ENCODE measurements at regions of chr2 and their contacts with region 1.

Region 1: GRCh38 chr2:75640621-75641121 is 5.9 kb upstream of the MRPL19 start:
- DNase-seq: peak in 8 of 9 experiments; percentile 11 to 62 (median 49)
- ATAC-seq: peak; percentile 99
- H3K4me3 ChIP-seq: no peak overlapping the region
- H3K4me3 Mint-ChIP-seq: no peak overlapping the region
- H3K27ac ChIP-seq: no peak overlapping the region
- H3K27ac Mint-ChIP-seq: no peak overlapping the region
- H3K4me1 ChIP-seq: no peaks in the 10 kb centered on the region
- H3K4me1 Mint-ChIP-seq: no peaks in the 10 kb centered on the region
- H3K27me3 ChIP-seq: no peaks in the 10 kb centered on the region
- H3K27me3 Mint-ChIP-seq: peaks cover 20% of the 10 kb centered on the region
- CTCF ChIP-seq: peak; percentile 99

Region 2: DNA sequence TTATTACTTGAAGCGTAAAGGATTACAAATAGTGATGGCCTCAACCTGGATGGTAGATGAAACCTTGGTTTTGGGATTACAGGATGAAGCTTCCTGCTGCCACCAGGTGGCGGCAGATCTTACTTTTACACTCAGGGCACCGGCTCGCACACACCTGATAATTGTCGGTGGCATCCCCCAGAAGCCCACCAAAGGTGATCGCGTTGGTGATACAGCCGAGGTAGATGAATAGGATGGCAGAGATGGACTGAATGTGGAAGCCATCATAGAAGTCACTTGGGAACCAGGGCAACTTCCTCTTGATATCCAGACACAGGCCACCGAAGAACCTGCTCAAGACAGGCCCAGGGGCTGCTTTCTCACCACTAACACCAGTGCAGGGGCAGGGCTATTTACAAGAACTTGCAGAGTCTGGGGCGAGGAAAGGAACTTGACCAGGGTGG is 1390.5 kb before region 1 on chr2:
- CTCF ChIA-PET with region 1: no interaction called
- POLR2A ChIA-PET with region 1: no interaction called
- intact Hi-C with region 1: no loop called
- DNase-seq: peak; percentile 7 to 79 (median 54)
- ATAC-seq: peak; percentile 75
- H3K4me3 ChIP-seq: no peak overlapping the region
- H3K4me3 Mint-ChIP-seq: no peak overlapping the region
- H3K27ac ChIP-seq: no peak overlapping the region
- H3K27ac Mint-ChIP-seq: no peak overlapping the region
- H3K4me1 ChIP-seq: peaks cover 3% of the 10 kb centered on the region
- H3K4me1 Mint-ChIP-seq: peaks cover 2% of the 10 kb centered on the region
- H3K27me3 ChIP-seq: no peaks in the 10 kb centered on the region
- H3K27me3 Mint-ChIP-seq: no peaks in the 10 kb centered on the region
- CTCF ChIP-seq: peak; percentile 83

Region 3: GRCh38 chr2:75627895-75628504 is 12.7 kb before region 1 on chr2:
- CTCF ChIA-PET with region 1: interaction called, 25 read pairs
- POLR2A ChIA-PET with region 1: no interaction called
- intact Hi-C with region 1: no loop called
- DNase-seq: peak; percentile 24 to 69 (median 57)
- ATAC-seq: peak; percentile 49
- H3K4me3 ChIP-seq: no peak overlapping the region
- H3K4me3 Mint-ChIP-seq: no peak overlapping the region
- H3K27ac ChIP-seq: no peak overlapping the region
- H3K27ac Mint-ChIP-seq: no peak overlapping the region
- H3K4me1 ChIP-seq: no peaks in the 10 kb centered on the region
- H3K4me1 Mint-ChIP-seq: no peaks in the 10 kb centered on the region
- H3K27me3 ChIP-seq: no peaks in the 10 kb centered on the region
- H3K27me3 Mint-ChIP-seq: peaks cover 13% of the 10 kb centered on the region
- CTCF ChIP-seq: peak; percentile 86

Region 4: DNA sequence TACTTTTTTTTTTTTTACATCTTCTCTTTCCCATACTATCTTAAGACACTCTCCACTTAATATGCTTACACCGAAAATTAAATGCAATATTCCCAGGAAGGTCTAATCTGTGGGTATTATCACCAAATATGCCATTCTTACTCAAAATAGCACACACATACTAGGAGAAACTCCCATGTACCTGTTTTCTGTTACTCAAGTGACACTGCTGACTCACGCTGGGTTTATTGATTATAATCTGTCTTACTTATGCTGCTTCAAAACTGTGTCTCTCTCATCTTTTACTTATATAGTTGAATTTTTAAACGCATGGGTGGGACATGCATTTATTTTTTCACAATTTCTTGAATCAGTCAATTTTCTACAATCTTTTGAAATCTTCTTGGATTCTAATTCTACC is 35.8 kb after region 1 on chr2:
- CTCF ChIA-PET with region 1: interaction called, 38 read pairs
- POLR2A ChIA-PET with region 1: no interaction called
- intact Hi-C with region 1: loop called (anchors 1 kb)
- DNase-seq: no peak
- ATAC-seq: no peak
- H3K4me3 ChIP-seq: no peak overlapping the region
- H3K4me3 Mint-ChIP-seq: no peak overlapping the region
- H3K27ac ChIP-seq: no peak overlapping the region
- H3K27ac Mint-ChIP-seq: no peak overlapping the region
- H3K4me1 ChIP-seq: no peaks in the 10 kb centered on the region
- H3K4me1 Mint-ChIP-seq: peaks cover 6% of the 10 kb centered on the region
- H3K27me3 ChIP-seq: no peaks in the 10 kb centered on the region
- H3K27me3 Mint-ChIP-seq: no peaks in the 10 kb centered on the region
- CTCF ChIP-seq: no peak

Region 5: DNA sequence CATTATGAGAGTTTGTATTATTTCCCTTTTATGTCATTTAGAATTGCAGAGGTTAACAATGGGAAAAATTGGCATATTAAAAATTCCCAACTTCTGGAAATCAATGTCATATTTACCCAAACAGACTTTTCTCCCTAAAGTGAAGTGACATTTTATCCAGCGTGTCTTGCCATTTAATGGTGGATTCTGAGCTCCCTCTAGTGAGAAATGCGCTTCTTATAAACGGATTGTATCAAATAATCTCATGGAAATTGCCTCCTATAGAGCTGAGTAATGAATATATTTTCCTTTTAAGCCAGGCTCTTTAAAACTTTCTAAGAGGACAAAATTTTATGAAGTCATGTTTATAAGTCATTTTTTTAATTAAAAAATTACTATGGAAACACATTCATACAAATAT is 75.7 kb after region 1 on chr2:
- CTCF ChIA-PET with region 1: interaction called, 7 read pairs
- POLR2A ChIA-PET with region 1: interaction called, 22 read pairs
- intact Hi-C with region 1: loop called in 1 of 2 experiments (anchors 2 kb)
- DNase-seq: no peak
- ATAC-seq: no peak
- H3K4me3 ChIP-seq: no peak overlapping the region
- H3K4me3 Mint-ChIP-seq: no peak overlapping the region
- H3K27ac ChIP-seq: no peak overlapping the region
- H3K27ac Mint-ChIP-seq: no peak overlapping the region
- H3K4me1 ChIP-seq: peaks cover 1% of the 10 kb centered on the region
- H3K4me1 Mint-ChIP-seq: peaks cover under 1% of the 10 kb centered on the region
- H3K27me3 ChIP-seq: no peaks in the 10 kb centered on the region
- H3K27me3 Mint-ChIP-seq: peaks cover 10% of the 10 kb centered on the region
- CTCF ChIP-seq: no peak

Region 6: DNA sequence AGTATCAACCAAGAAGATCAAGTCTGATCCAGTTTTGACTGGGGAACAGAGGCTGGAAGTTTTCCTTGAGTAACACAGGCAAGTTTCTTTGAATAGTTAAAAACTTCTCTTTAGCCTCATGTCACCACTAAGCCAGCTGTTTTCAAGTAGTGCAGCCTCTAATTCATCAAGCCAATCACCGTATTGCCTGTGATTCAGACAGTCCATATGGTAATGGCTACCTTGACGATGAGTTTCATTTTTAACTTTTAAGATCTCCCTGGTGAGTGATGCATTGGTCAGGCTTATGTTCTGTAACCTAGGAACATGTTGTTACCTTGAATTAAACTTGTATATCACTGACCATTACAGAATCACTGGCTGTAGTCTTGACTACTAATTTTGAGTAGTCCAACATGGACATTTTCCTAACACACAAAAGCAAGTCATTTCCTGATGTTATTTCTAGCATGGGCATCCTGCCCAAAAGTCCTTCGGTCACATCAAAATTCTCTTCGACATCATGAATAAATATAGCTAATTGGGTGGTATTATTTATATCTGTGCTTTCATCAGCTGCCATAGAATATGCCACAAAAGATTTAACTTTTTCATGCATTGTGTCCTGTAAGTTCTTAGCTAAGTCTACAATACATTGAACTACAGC is 308.8 kb after region 1 on chr2:
- CTCF ChIA-PET with region 1: no interaction called
- POLR2A ChIA-PET with region 1: no interaction called
- intact Hi-C with region 1: no loop called
- DNase-seq: no peak
- ATAC-seq: no peak
- H3K4me3 ChIP-seq: no peak overlapping the region
- H3K4me3 Mint-ChIP-seq: no peak overlapping the region
- H3K27ac ChIP-seq: no peak overlapping the region
- H3K27ac Mint-ChIP-seq: no peak overlapping the region
- H3K4me1 ChIP-seq: no peaks in the 10 kb centered on the region
- H3K4me1 Mint-ChIP-seq: no peaks in the 10 kb centered on the region
- H3K27me3 ChIP-seq: no peaks in the 10 kb centered on the region
- H3K27me3 Mint-ChIP-seq: no peaks in the 10 kb centered on the region
- CTCF ChIP-seq: no peak